A549 (cell line): ENCODE measurements at regions of chr7 and their contacts with region 1.

Region 1: DNA sequence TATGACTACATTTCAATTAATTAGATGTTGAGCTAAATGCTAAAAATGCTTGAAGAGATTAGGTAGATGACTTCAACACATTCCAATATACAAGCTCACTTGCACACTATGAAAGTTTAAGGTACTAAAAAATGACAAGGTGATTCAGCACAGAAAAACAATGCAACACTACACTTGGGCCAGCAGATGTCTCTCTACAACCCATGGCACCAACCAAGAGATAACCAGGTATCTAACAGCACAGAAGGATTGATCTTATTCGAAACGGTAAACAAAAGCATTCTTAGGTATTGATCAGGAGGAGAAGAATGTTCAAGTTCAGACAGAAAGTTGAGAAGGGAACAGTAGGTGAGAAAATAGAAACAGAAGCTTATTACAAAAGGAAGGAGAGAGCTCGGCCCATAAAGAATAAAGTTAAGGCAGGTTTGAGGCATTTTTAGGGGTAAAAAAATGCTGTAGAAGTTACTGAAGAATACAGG is 248.2 kb upstream of the KLF14 start:
- DNase-seq: peak; percentile 43 to 63
- ATAC-seq: peak; percentile 83 to 85
- H3K4me3 ChIP-seq: no peak overlapping the region
- H3K27ac ChIP-seq: peak overlapping the region in 1 of 2 experiments; percentile 45; a peak in 4 of 6 replicates
- H3K4me1 ChIP-seq: peaks cover 41% of the 10 kb centered on the region
- CTCF ChIP-seq: peak; percentile 77
- EP300 ChIP-seq: no peak
- POLR2A ChIP-seq: no peak
- RAD21 ChIP-seq: peak; percentile 63 to 76

Region 2: GRCh38 chr7:130966246-130967009 is 15.8 kb before region 1 on chr7:
- CTCF ChIA-PET with region 1: interaction called, 34 read pairs
- POLR2A ChIA-PET with region 1: no interaction called
- DNase-seq: no peak
- ATAC-seq: no peak
- H3K4me3 ChIP-seq: no peak overlapping the region
- H3K27ac ChIP-seq: peak overlapping the region in 1 of 2 experiments; percentile 42; a peak in 1 of 6 replicates
- H3K4me1 ChIP-seq: peaks cover 44% of the 10 kb centered on the region
- CTCF ChIP-seq: no peak
- EP300 ChIP-seq: no peak
- POLR2A ChIP-seq: no peak
- RAD21 ChIP-seq: no peak

Region 3: GRCh38 chr7:130996841-130997231 is 14.6 kb after region 1 on chr7:
- CTCF ChIA-PET with region 1: interaction called, 53 read pairs
- POLR2A ChIA-PET with region 1: no interaction called
- DNase-seq: peak in 1 of 2 experiments; percentile 69
- ATAC-seq: peak; percentile 45 to 75; a peak in 5 of 6 replicates
- H3K4me3 ChIP-seq: no peak overlapping the region
- H3K27ac ChIP-seq: peak overlapping the region; percentile 69 to 81
- H3K4me1 ChIP-seq: peaks cover 60% of the 10 kb centered on the region
- CTCF ChIP-seq: no peak
- EP300 ChIP-seq: no peak
- POLR2A ChIP-seq: no peak
- RAD21 ChIP-seq: no peak

Region 4: GRCh38 chr7:131007394-131008330 is 25.5 kb after region 1 on chr7:
- CTCF ChIA-PET with region 1: interaction called, 49 read pairs
- POLR2A ChIA-PET with region 1: no interaction called
- DNase-seq: peak; percentile 79 to 93
- ATAC-seq: peak; percentile 86
- H3K4me3 ChIP-seq: no peak overlapping the region
- H3K27ac ChIP-seq: peak overlapping the region; percentile 87 to 91
- H3K4me1 ChIP-seq: peaks cover 65% of the 10 kb centered on the region
- CTCF ChIP-seq: peak; percentile 68
- EP300 ChIP-seq: no peak
- POLR2A ChIP-seq: no peak
- RAD21 ChIP-seq: peak; percentile 76 to 82

Region 5: GRCh38 chr7:131020759-131021261 is 38.6 kb after region 1 on chr7:
- CTCF ChIA-PET with region 1: interaction called, 17 read pairs
- POLR2A ChIA-PET with region 1: no interaction called
- DNase-seq: no peak
- ATAC-seq: 0 out of 6 replicates have a peak, but pooled peaks of 1 of the 2 experiments have one; percentile 9
- H3K4me3 ChIP-seq: no peak overlapping the region
- H3K27ac ChIP-seq: no peak overlapping the region
- H3K4me1 ChIP-seq: peaks cover 24% of the 10 kb centered on the region
- CTCF ChIP-seq: no peak
- EP300 ChIP-seq: no peak
- POLR2A ChIP-seq: no peak
- RAD21 ChIP-seq: no peak